ENCODE measurements at regions of chr2 and their contacts with region 1.

Region 1: GRCh38 chr2:44994377-44994776 is 14.9 kb downstream of the SIX2 start:
- DNase-seq: no peak
- ATAC-seq: no peak
- H3K4me3 ChIP-seq: no peak overlapping the region
- H3K27ac ChIP-seq: no peak overlapping the region
- H3K4me1 ChIP-seq: no peaks in the 10 kb centered on the region
- H3K27me3 ChIP-seq: peaks cover 9 to 77% (median 23%) of the 10 kb centered on the region in 9 donors
- CTCF ChIP-seq: no peak
- POLR2A ChIP-seq: no peak

Region 2: GRCh38 chr2:44952143-44952805 is 42.1 kb before region 1 on chr2:
- intact Hi-C with region 1: no loop called
- DNase-seq: no peak
- ATAC-seq: peak in 3 of 4 donors; percentile 54 to 69 (median 57)
- H3K4me3 ChIP-seq: peak overlapping the region in 10 of 12 donors; percentile 17 to 55 (median 42)
- H3K27ac ChIP-seq: no peak overlapping the region
- H3K4me1 ChIP-seq: peaks cover 0 to 44% (median 30%) of the 10 kb centered on the region in 12 donors
- H3K27me3 ChIP-seq: peaks cover 27 to 99% (median 83%) of the 10 kb centered on the region in 9 donors
- CTCF ChIP-seq: peak; percentile 32 to 77 (median 59)
- POLR2A ChIP-seq: no peak

Region 3: GRCh38 chr2:45484965-45485364 is 490.6 kb after region 1 on chr2:
- intact Hi-C with region 1: loop called in 1 of 10 experiments (anchors 5 kb)
- DNase-seq: no peak
- ATAC-seq: no peak
- H3K4me3 ChIP-seq: no peak overlapping the region
- H3K27ac ChIP-seq: no peak overlapping the region
- H3K4me1 ChIP-seq: no peaks in the 10 kb centered on the region
- H3K27me3 ChIP-seq: no peaks in the 10 kb centered on the region
- CTCF ChIP-seq: no peak
- POLR2A ChIP-seq: no peak

Measured in heart left ventricle (tissue), 16 donors.